HAP-1 (cell line): ENCODE measurements at regions of chr12 and their contacts with region 1.

Region 1: DNA sequence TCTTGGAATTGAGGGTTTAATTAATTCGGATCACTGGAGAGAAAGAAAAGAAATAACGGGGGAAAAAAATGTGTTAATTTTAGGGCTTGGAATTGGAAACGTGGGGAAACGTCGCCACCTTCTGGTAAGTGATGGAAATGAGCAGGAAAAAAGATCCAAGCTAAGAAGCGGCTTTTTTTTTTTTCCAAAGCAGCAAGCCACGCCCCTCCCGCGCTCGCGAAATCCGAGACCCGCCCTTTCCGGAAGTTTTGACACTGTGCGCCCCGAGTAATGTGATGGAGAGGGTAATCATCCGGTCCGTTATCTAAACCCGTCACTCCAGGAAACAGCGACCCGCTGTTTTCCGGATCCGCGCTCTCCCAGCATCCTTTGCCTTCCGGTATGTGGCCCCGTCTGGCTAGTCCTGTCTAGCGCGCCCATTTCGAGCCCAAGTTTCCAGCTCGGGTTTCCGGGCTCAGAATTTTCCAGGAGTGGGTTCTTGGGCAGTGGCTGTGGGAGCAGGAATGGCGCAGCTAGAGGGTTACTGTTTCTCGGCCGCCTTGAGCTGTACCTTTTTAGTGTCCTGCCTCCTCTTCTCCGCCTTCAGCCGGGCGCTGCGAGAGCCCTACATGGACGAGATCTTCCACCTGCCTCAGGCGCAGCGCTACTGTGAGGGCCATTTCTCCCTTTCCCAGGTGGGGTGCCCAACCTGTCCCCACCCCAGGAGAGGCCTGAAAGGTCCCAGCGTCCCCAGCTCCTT is at the start of gene ALG10B:
- DNase-seq: peak; percentile 88 to 94
- H3K4me3 ChIP-seq: peak within 1 kb of the TSS; percentile 67
- H3K4me1 ChIP-seq: peaks cover 8% of the 10 kb centered on the region
- H3K27me3 ChIP-seq: no peaks in the 10 kb centered on the region

Region 2: DNA sequence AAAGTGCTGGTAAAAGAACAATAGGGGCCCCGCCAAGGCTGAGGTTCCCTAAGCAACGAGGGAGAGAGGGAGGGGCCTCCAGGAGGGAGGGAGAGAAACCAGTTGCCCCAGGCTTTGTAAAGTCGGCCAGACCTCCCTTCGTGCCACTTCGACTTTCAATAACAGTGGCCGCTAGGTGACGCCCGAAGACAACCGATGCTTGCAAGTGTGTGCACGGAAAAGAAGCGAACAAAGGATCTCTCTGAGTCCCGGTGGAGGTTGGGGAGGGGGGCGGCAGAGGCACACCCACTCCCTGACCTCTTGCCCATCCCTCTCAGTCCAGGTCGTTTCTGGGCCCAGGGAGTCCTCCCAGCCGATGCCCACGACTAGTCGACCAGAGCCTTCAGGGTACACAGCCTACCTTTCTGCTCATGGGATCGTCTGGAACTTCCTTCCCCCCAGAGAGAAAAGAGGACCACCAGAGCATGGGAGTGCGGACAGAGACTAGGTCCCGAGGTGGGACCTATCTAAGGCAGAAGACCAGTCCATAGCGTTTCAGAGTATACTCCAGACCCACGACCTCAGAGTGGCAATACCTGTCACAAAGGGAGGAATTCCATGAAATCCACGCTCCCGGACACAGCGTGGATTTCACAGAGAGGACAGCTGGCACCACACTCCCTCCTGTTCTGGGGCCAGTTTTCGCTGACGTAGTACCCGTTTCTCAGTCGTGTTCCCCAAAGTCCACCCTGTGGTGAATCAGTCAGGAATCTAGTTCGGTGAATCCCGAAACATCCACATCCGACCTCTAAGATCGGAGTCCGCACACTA is 262.7 kb before region 1 on chr12:
- in situ Hi-C with region 1: loop called (anchors 5 kb)
- DNase-seq: peak; percentile 80 to 91
- H3K4me3 ChIP-seq: no peak overlapping the region
- H3K4me1 ChIP-seq: no peaks in the 10 kb centered on the region
- H3K27me3 ChIP-seq: no peaks in the 10 kb centered on the region

Region 3: GRCh38 chr12:38138225-38139221 is 178.0 kb before region 1 on chr12:
- in situ Hi-C with region 1: loop called (anchors 5 kb)
- DNase-seq: peak; percentile 62 to 89
- H3K4me3 ChIP-seq: peak overlapping the region; percentile 39
- H3K4me1 ChIP-seq: no peaks in the 10 kb centered on the region
- H3K27me3 ChIP-seq: no peaks in the 10 kb centered on the region

Region 4: DNA sequence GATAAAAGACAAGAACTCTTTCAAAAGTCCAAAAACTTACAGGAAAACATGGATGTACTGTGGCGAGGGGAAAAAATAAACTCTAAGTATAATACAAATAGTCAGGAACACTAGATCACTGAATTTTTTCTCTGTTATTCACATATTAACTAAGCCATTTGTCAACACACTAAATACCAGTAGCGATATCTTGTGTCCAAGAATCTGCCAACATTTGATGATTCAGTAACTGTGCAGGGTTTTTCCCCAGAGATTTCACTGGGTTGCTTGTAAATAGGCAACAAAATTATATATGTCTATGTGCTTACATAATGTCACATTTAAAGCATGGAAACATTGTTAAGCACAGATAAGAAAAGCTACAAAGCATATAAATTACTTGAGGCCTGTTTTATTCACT is 920.4 kb after region 1 on chr12:
- in situ Hi-C with region 1: no loop called
- DNase-seq: no peak
- H3K4me3 ChIP-seq: no peak overlapping the region
- H3K4me1 ChIP-seq: peaks cover 22% of the 10 kb centered on the region
- H3K27me3 ChIP-seq: no peaks in the 10 kb centered on the region